ENCODE measurements at regions of chr11 and their contacts with region 1.

Region 1: GRCh38 chr11:43944761-43945311 is 2.4 kb downstream of the C11orf96 start:
- DNase-seq: peak; percentile 94

Region 2: DNA sequence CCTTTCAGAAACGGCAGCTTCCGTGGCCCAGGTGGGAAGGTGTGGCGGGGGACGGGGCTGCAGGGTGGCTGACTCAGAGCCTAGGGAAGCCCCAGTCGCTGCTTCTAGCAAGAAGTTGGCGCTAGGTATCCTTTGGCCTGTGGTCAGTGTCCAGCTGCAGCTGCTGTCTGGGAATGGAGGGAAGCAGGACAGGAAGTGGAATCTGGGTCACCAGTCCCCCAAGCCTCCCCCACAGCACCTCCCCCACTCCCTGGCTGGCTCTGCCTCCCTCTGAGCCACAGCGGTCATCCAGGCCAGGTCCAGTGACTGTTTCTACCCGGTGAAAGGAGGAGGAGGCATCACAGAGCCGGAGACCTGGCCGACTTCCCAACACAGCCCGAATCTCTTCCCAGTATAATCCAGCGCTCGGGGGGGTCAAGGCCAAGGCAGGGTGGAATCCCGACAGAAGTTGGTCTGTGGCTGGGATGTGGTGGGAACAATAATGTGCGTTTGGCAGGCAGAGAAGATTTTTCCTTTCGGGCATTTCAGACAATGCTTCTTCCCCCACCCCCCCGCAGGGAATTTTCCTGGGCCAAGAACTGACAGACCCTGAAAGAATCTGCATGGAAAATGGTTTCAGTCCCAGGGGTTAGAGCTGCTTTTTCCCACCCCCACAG is 42.7 kb after region 1 on chr11:
- intact Hi-C with region 1: loop called in 1 of 2 experiments (anchors 5 kb)
- DNase-seq: peak; percentile 98